GM12878 (cell line): ENCODE measurements at regions of chr5 and their contacts with region 1.

Region 1: DNA sequence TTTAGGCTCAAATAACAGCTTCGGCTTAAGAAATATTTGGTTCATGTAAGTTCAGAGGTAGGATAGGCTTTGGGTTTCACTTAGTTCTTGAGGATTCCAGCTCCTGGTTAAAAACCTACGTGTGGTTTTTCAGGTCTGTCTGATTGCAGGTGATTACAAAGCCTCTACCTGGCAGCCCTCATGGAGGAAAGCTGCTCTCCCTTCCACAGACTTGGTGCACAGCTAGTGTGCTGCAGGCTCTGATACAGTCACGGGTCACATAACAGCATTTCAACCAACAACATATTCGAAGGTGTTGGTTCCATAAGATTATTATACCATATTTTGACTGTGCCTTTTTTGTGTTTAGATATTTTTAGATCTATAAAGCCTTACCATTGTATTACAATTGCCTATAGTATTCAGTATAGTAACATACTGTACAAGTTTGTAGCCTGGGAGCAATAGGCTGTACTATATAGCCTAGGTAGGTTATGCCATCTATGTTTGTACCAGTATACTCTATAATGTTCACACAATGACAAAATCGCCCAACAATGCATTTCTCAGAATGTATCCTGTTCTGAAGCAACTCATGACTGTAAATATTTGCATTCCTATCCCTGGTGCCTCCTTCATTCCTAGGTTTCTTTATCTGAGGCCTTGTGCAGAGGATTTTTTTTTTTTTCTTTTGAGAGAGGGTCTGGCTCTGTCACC is 8.0 kb upstream of the DCP2 start:
- DNase-seq: no peak
- ATAC-seq: no peak
- H3K4me3 ChIP-seq: no peak overlapping the region
- H3K27ac ChIP-seq: no peak overlapping the region
- H3K4me1 ChIP-seq: peaks cover 32% of the 10 kb centered on the region
- H3K27me3 ChIP-seq: no peaks in the 10 kb centered on the region
- CTCF ChIP-seq: no peak
- EP300 ChIP-seq: no peak
- POLR2A ChIP-seq: no peak
- RAD21 ChIP-seq: no peak

Region 2: DNA sequence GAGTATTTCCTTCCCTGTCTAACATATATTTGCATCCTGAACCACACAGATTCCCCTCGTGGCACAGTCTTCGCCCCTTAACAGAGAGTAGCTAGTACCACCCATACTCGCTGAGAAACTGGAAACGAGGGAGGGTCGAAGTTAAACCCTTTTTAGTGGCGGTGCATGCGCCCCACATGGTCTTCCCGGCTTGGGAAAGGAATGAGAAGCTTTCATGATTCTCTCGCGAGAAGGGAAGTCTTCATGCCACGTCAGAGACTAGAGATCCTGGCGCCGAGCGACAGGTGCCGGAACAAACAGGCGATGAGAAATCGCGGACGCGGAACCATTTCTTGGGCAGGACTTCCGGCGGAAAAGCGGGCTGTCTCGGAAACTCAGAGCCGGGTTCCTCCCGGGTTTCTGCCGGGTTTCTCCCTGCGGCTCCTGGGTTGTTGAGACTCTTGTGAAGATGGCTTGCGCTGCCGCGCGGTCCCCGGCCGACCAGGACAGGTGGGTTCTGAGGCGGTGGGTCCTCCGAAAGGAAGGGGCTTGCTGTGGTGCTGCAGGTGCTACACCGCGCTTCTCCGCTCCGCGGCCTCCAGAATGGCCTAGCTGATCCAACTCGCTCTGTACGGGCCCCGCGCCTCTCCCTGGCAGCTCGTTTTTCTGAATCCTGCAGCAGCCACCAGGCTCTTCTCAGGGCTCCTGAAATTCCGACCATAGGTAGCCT is 107.5 kb before region 1 on chr5 and contains the start of gene SRP19:
- CTCF ChIA-PET with region 1: interaction called, 3 read pairs
- POLR2A ChIA-PET with region 1: no interaction called
- RAD21 ChIA-PET with region 1: interaction called, 3 read pairs
- SMC1A ChIA-PET with region 1: interaction called, 9 read pairs
- in situ Hi-C with region 1: loop called (anchors 5 kb)
- intact Hi-C with region 1: loop called (anchors 2 kb)
- DNase-seq: peak; percentile 82
- ATAC-seq: peak; percentile 96
- H3K4me3 ChIP-seq: peak within 1 kb of the TSS; percentile 94
- H3K27ac ChIP-seq: peak within 1 kb of the TSS; percentile 90
- H3K4me1 ChIP-seq: peaks cover 8% of the 10 kb centered on the region
- H3K27me3 ChIP-seq: no peaks in the 10 kb centered on the region
- CTCF ChIP-seq: no peak
- EP300 ChIP-seq: no peak
- POLR2A ChIP-seq: peak; percentile 77
- RAD21 ChIP-seq: no peak
- polyA plus RNA-seq, gene SRP19: 301 to 379 TPM

Region 3: DNA sequence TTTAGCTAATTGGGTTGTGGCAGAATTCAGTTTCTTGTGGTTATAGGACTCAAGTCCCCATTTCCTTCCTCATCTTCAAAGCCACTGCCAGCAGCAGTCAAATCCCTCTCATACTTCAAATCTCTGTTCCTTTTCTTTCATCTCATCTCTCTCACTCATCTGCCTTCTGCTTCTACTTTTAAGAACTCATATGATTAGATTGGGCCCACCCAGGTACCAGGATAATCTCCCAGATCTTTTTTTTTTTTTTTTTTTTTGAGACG is 38.5 kb before region 1 on chr5:
- CTCF ChIA-PET with region 1: interaction called, 9 read pairs
- POLR2A ChIA-PET with region 1: interaction called, 7 read pairs
- RAD21 ChIA-PET with region 1: interaction called, 85 read pairs
- SMC1A ChIA-PET with region 1: interaction called, 24 read pairs
- in situ Hi-C with region 1: loop called (anchors 5 kb)
- intact Hi-C with region 1: loop called (anchors 1 kb)
- DNase-seq: peak; percentile 84
- ATAC-seq: peak; percentile 69
- H3K4me3 ChIP-seq: no peak overlapping the region
- H3K27ac ChIP-seq: peak overlapping the region; percentile 85
- H3K4me1 ChIP-seq: peaks cover 56% of the 10 kb centered on the region
- H3K27me3 ChIP-seq: no peaks in the 10 kb centered on the region
- CTCF ChIP-seq: no peak
- EP300 ChIP-seq: peak; percentile 28 to 70; a peak in 1 of 4 replicates
- POLR2A ChIP-seq: no peak
- RAD21 ChIP-seq: no peak

Region 4: GRCh38 chr5:113378959-113379541 is 410.5 kb after region 1 on chr5:
- CTCF ChIA-PET with region 1: no interaction called
- POLR2A ChIA-PET with region 1: no interaction called
- RAD21 ChIA-PET with region 1: no interaction called
- SMC1A ChIA-PET with region 1: no interaction called
- in situ Hi-C with region 1: no loop called
- intact Hi-C with region 1: no loop called
- DNase-seq: peak; percentile 9
- ATAC-seq: peak; percentile 84
- H3K4me3 ChIP-seq: no peak overlapping the region
- H3K27ac ChIP-seq: no peak overlapping the region
- H3K4me1 ChIP-seq: no peaks in the 10 kb centered on the region
- H3K27me3 ChIP-seq: no peaks in the 10 kb centered on the region
- CTCF ChIP-seq: peak; percentile 67 to 80 (median 77)
- EP300 ChIP-seq: no peak
- POLR2A ChIP-seq: no peak
- RAD21 ChIP-seq: peak; percentile 76